WTC11 (cell line): ENCODE measurements at regions of chr19 and their contacts with region 1.

Region 1: GRCh38 chr19:12974301-12975220 is 5.2 kb downstream of the DAND5 start:
- DNase-seq: no peak
- ATAC-seq: no peak
- H3K4me3 Mint-ChIP-seq: no peak overlapping the region
- H3K27ac Mint-ChIP-seq: no peak overlapping the region
- H3K4me1 Mint-ChIP-seq: no peaks in the 10 kb centered on the region
- H3K27me3 Mint-ChIP-seq: peaks cover 5% of the 10 kb centered on the region
- CTCF ChIP-seq: no peak

Region 2: DNA sequence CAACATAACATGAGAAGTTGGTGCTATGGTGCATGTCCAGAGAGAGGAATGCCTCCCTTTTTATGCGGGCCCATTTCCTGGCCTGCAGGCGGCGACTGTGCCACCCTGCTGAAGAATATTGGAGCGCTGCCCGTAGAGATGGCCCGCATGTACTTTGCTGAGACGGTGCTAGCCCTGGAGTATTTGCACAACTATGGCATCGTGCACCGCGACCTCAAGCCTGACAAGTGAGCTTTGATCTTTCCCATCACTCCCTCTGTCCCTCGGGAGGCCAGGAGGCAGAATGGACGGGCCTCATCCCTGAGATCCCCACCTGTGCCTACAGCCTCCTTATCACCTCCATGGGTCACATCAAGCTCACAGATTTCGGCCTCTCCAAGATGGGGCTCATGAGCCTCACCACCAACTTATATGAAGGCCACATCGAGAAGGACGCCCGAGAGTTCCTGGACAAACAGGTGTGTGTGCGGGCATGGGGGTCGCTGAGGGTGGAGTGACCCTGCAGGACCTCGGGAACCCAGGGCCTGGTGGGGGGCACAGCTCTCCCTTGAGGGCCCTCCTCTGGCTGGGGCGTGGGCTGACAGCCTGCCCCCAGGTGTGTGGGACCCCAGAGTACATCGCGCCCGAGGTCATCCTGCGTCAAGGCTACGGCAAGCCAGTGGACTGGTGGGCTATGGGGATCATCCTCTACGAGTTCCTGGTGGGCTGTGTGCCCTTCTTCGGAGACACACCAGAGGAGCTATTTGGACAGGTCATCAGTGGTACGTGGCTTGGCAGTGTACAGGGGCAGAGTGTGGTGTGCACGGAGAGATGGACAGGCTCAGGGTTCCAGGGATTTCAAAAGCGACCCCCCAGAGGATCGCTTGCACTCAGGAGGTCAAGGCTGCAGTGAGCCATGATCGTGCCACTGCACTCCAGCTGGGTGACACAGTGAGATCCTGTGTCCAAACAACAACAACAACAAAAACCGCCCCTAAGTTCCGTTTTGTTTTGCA is 109.5 kb before region 1 on chr19:
- CTCF ChIA-PET with region 1: no interaction called
- POLR2A ChIA-PET with region 1: no interaction called
- DNase-seq: no peak
- ATAC-seq: no peak
- H3K4me3 Mint-ChIP-seq: no peak overlapping the region
- H3K27ac Mint-ChIP-seq: no peak overlapping the region; the same call in 1 of the 2 replicates
- H3K4me1 Mint-ChIP-seq: peaks cover 28% of the 10 kb centered on the region
- H3K27me3 Mint-ChIP-seq: peaks cover 9% of the 10 kb centered on the region; the same call in 1 of the 2 replicates
- CTCF ChIP-seq: no peak

Region 3: DNA sequence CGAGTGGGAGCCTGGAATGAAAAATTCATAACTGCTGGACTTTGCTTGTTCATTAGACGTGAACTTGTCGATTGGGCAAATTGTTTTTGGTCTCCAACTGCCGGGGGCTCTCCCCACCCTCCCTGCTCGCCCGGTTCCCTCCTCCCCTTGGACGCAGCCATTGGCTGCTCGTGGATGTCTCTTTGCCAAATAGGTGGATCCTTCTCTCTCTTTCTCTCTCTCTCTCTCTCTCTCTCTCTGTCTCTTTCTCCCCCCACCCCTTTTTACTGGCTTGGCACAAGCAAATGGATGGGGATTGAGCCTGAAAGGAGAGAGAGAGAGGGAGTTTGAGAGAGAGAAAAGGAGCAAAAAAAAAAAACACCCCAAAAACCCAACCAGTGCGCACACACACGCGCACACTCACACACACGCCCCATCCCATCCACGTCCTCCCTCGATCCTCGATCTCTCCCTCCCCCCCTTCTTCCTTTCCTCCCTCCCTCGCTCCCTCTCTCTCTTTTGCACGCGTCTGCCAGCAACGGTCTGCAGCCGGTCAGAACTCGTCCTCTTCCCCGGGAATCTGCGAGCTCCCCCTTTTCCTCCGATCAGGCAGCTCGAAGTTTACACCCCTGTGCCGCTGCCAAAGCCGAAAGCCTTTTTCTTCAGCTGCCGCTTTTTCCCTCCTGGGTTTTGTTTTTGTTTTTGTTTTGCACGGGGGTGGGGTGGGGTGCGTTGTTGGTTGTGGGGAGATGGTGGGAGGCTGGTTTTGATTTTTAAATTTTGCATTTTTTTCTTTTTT is 48.5 kb after region 1 on chr19:
- CTCF ChIA-PET with region 1: interaction called, 116 read pairs
- POLR2A ChIA-PET with region 1: no interaction called
- DNase-seq: peak; percentile 61
- ATAC-seq: 0 out of 2 replicates have a peak, but pooled peaks have one; percentile 6
- H3K4me3 Mint-ChIP-seq: peak overlapping the region; percentile 57
- H3K27ac Mint-ChIP-seq: no peak overlapping the region
- H3K4me1 Mint-ChIP-seq: peaks cover 71% of the 10 kb centered on the region
- H3K27me3 Mint-ChIP-seq: peaks cover 100% of the 10 kb centered on the region
- CTCF ChIP-seq: no peak

Region 4: GRCh38 chr19:13044231-13044836 is 69.8 kb after region 1 on chr19:
- CTCF ChIA-PET with region 1: interaction called, 25 read pairs
- POLR2A ChIA-PET with region 1: no interaction called
- DNase-seq: no peak
- ATAC-seq: no peak
- H3K4me3 Mint-ChIP-seq: no peak overlapping the region
- H3K27ac Mint-ChIP-seq: no peak overlapping the region
- H3K4me1 Mint-ChIP-seq: peaks cover 4% of the 10 kb centered on the region
- H3K27me3 Mint-ChIP-seq: peaks cover 79% of the 10 kb centered on the region
- CTCF ChIP-seq: no peak

Region 5: DNA sequence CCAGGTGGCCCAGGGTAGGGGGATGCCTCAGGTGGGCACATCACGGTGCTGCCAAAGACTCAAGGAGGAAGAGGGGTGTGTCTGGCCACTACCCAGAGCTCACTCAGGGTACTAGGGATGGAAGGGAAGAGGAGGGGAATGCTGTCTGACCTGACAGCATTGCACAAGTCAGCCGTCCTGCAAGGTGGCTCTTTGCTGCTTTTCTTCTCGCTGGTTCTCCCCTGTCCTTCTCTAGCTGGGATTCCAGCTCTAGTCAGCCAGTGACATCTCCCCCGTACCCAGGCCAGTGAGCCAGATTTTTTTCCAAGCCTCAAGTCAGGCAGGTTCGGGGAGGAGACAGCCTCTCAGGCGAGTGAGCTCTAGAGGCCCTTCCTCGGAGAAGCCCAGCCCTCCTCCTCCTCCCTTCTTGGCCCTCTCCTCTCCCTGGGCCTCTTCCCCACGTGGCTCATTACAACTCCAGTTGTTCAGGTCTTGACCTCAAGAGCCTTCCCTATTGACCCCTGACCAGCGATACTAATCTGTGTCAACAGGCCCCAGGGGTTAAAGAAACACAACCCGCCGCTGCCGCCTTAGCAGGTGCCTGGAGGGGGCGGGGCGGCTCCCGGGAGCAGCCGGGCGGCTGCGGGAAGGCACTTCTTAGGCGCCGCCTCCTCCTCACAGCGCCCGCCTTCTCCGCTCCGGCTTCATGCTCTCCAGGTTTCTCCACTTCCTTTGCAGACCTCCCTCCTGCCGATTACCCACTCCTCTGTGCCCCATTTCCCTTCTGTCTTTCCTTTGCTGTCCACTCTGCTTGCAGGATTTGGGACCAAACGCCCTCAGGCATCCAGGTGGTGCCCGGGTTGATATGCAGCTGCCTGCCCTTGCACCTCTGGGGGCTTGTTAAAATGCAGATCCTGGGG is 77.0 kb after region 1 on chr19:
- CTCF ChIA-PET with region 1: interaction called, 188 read pairs
- POLR2A ChIA-PET with region 1: no interaction called
- DNase-seq: peak; percentile 89
- ATAC-seq: peak; percentile 79
- H3K4me3 Mint-ChIP-seq: peak overlapping the region; percentile 57
- H3K27ac Mint-ChIP-seq: no peak overlapping the region
- H3K4me1 Mint-ChIP-seq: peaks cover 42% of the 10 kb centered on the region
- H3K27me3 Mint-ChIP-seq: peaks cover 99% of the 10 kb centered on the region
- CTCF ChIP-seq: no peak

Region 6: GRCh38 chr19:13069415-13070359 is 95.1 kb after region 1 on chr19:
- CTCF ChIA-PET with region 1: interaction called, 16 read pairs
- POLR2A ChIA-PET with region 1: no interaction called
- DNase-seq: no peak
- ATAC-seq: peak; percentile 34
- H3K4me3 Mint-ChIP-seq: no peak overlapping the region
- H3K27ac Mint-ChIP-seq: no peak overlapping the region
- H3K4me1 Mint-ChIP-seq: no peaks in the 10 kb centered on the region
- H3K27me3 Mint-ChIP-seq: peaks cover 6% of the 10 kb centered on the region
- CTCF ChIP-seq: no peak

Region 7: DNA sequence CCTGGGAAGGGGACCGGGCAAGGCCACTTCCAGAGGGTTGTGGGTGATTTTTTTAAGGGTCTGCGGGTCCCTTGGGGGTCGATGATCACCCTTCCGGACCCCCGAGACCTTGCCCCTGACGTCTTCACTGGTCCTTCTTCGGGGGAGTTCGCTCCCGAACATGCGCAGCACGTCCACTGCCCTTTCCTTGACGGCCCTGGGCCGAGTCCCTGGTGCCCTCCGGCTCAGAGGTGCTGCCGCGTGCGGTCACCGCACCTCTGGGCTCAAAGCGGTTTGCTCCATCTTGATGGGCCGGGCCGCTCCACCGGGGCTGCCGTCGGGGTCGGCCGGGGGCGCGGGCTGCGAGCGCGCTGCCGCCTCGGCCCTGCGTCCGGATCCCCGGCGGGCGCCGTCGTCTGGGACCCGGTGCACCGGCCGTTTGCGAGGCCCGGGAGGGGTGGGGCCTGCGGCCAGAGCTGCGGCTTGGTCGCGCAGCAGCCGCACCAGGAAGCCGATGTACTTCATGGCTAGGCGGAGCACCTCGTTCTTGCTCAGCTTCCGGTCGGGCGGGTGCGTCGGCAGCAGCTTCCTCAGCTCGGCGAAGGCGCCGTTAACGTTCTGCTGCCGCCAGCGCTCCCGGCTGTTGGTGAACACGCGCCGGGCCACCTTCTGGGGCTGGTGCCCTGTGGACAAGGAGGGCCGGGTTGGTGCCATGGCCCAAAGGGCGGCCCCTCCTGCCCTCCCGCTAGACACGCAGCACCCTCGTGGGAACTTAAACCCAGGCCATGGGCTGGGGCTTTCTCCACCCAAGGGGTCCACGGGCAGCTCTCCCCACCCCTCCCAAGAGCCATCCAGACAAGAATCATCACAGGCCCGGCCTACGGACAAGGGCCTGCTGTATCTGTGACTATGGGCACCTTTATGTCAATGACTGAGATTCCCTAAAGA is 124.8 kb after region 1 on chr19:
- CTCF ChIA-PET with region 1: interaction called, 276 read pairs
- POLR2A ChIA-PET with region 1: interaction called, 6 read pairs
- DNase-seq: peak; percentile 69
- ATAC-seq: no peak
- H3K4me3 Mint-ChIP-seq: peak overlapping the region; percentile 57
- H3K27ac Mint-ChIP-seq: no peak overlapping the region
- H3K4me1 Mint-ChIP-seq: peaks cover 23% of the 10 kb centered on the region
- H3K27me3 Mint-ChIP-seq: peaks cover 77% of the 10 kb centered on the region
- CTCF ChIP-seq: no peak